Activated CD4-positive, alpha-beta T cell treated with anti-CD3 and anti-CD28 coated beads for 36 hours (primary cell): ENCODE measurements at regions of chr3 and their contacts with region 1.

Region 1: DNA sequence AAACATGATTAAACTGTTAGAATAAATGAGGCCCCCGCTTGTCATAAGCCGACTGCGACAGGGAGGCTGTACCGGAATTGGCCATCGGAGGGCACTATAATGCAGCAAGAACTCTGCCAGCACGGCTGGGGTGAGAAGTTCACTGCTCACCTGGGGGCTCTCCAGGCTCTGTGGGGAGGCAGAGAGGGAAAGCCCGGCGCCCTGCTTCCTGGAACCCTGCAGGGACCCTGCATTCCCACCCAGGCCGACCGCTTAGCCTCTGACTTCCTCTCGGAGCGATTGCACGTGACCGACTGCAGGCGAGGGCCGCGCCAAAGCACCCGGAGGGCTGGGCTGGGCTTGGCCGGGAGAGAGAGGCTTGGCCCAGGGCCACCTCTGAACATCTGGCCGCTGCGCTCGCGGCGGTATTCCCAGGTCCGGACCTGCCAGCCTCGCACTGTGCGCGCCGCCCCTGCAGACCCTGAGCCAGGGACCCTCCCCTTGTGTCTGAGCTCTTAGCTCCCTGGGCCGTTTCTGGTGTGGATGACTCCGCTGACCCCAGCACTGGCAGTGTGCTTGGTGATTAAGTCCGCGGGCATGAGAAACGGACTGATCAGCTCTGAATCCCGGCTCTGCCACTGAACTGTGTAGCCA is 26.2 kb downstream of the DRD3 start:
- DNase-seq: peak; percentile 91
- ATAC-seq: peak; percentile 92
- H3K4me3 Mint-ChIP-seq: peak overlapping the region; percentile 15
- H3K27ac Mint-ChIP-seq: no peak overlapping the region
- H3K4me1 Mint-ChIP-seq: peaks cover 11% of the 10 kb centered on the region
- H3K27me3 Mint-ChIP-seq: no peaks in the 10 kb centered on the region

Region 2: GRCh38 chr3:113838631-113839209 is 313.9 kb before region 1 on chr3 and contains the start of gene GRAMD1C:
- CTCF ChIA-PET with region 1: no interaction called
- POLR2A ChIA-PET with region 1: no interaction called
- intact Hi-C with region 1: loop called in 1 of 2 experiments (anchors 5 kb)
- DNase-seq: peak; percentile 92
- ATAC-seq: peak; percentile 98
- H3K4me3 Mint-ChIP-seq: peak within 1 kb of the TSS; percentile 73
- H3K27ac Mint-ChIP-seq: no peak within 1 kb of the TSS
- H3K4me1 Mint-ChIP-seq: peaks cover 8% of the 10 kb centered on the region
- H3K27me3 Mint-ChIP-seq: peaks cover 3% of the 10 kb centered on the region
- total RNA-seq, gene GRAMD1C: 0.87 to 0.97 TPM

Region 3: GRCh38 chr3:114122027-114122709 is 30.5 kb before region 1 on chr3:
- CTCF ChIA-PET with region 1: no interaction called
- POLR2A ChIA-PET with region 1: no interaction called
- intact Hi-C with region 1: no loop called
- DNase-seq: no peak
- ATAC-seq: peak; percentile 60
- H3K4me3 Mint-ChIP-seq: no peak overlapping the region
- H3K27ac Mint-ChIP-seq: no peak overlapping the region
- H3K4me1 Mint-ChIP-seq: no peaks in the 10 kb centered on the region
- H3K27me3 Mint-ChIP-seq: peaks cover 2% of the 10 kb centered on the region

Region 4: GRCh38 chr3:114290911-114291901 is 138.6 kb after region 1 on chr3:
- CTCF ChIA-PET with region 1: interaction called, 14 read pairs
- POLR2A ChIA-PET with region 1: no interaction called
- intact Hi-C with region 1: loop called in 1 of 2 experiments (anchors 2 kb)
- DNase-seq: peak; percentile 94
- ATAC-seq: peak; percentile 76
- H3K4me3 Mint-ChIP-seq: peak overlapping the region; percentile 51
- H3K27ac Mint-ChIP-seq: peak overlapping the region; percentile 91
- H3K4me1 Mint-ChIP-seq: peaks cover 34% of the 10 kb centered on the region
- H3K27me3 Mint-ChIP-seq: no peaks in the 10 kb centered on the region

Region 5: GRCh38 chr3:114336122-114336697 is 183.6 kb after region 1 on chr3:
- CTCF ChIA-PET with region 1: interaction called, 3 read pairs
- POLR2A ChIA-PET with region 1: no interaction called
- intact Hi-C with region 1: loop called in 1 of 2 experiments (anchors 1 kb)
- DNase-seq: no peak
- ATAC-seq: no peak
- H3K4me3 Mint-ChIP-seq: no peak overlapping the region
- H3K27ac Mint-ChIP-seq: peak overlapping the region; percentile 76
- H3K4me1 Mint-ChIP-seq: peaks cover 59% of the 10 kb centered on the region
- H3K27me3 Mint-ChIP-seq: no peaks in the 10 kb centered on the region

Region 6: DNA sequence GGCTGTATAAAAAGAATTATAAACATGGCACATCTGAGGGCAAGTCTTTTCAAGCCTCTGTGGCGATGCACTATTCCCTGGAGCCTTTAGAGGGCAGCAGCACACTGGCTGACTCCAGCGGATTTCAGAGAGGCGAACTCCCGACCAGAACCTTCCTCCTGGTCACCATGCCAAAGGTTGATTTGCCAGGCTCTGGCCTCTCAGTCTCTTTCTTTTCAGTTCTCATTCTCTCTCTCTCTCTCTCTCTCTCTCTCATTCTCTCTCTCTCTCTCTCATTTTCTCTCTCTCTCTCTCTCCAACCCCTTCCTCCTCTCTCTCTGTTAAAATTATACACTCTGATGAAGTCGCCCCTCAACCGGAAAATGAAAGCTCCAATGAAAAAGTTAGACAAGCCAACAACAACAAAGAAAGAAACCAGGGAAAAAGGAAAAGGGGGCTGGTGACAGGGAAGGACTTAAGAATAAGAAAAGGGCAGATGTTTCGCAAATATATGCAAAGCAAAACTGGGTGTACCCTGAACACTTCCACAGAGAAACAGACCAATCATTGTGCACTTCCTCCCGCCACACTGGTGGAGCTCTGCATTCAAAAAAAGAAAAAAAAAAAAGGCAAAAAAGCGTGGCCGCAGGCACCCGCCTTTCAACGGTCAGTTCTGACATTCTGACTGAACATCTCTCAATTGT is 231.4 kb after region 1 on chr3:
- CTCF ChIA-PET with region 1: interaction called, 11 read pairs
- POLR2A ChIA-PET with region 1: no interaction called
- intact Hi-C with region 1: loop called in 1 of 2 experiments (anchors 1 kb)
- DNase-seq: peak; percentile 83
- ATAC-seq: peak; percentile 93
- H3K4me3 Mint-ChIP-seq: peak overlapping the region; percentile 53
- H3K27ac Mint-ChIP-seq: peak overlapping the region; percentile 84
- H3K4me1 Mint-ChIP-seq: peaks cover 11% of the 10 kb centered on the region
- H3K27me3 Mint-ChIP-seq: no peaks in the 10 kb centered on the region